Posterior vena cava (tissue), 2 donors: ENCODE measurements at regions of chr20 and their contacts with region 1.

Region 1: DNA sequence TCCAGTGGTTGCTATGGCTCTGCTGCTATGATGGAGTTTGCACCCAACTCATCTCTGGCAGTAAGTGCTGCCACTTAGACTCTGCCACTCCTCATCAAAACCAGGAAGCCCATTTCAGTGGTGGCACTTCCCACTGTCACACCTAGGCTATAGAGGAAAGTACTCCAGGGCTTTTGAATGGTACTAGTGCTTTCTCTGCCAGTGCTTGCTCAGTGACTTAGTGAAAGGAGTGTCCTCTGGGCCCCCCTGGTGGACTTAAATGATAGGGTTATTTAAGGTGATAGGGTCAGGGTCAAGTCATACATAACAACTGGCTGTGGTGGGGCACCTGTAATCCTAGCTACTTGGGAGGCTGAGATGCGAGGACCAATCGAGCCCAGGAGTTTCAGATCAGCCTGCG is 22.8 kb downstream of the FITM2 start:
- DNase-seq: no peak

Region 2: DNA sequence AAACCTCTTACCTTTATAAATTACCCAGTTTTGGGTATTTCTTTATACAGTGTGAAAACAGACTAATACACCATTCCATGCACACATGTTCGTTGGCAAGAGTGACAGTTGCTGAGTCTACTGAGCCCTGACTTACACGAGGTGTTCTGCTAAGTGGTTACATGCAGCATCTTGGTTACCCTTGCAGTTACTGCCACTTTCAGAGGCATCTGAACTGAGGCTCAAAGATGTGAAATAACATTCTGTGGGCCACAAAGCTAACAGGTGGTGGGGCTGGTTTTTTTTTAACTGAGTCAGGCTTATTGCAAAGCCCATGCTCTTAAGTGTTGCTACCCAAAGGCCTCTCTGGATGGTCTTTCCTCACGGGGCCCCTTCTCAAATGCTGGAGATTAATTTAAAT is 507.0 kb before region 1 on chr20:
- intact Hi-C with region 1: no loop called
- DNase-seq: no peak

Region 3: GRCh38 chr20:44319756-44320422 is 31.6 kb after region 1 on chr20:
- intact Hi-C with region 1: loop called in 1 of 2 experiments (anchors 2 kb)
- DNase-seq: no peak

Region 4: DNA sequence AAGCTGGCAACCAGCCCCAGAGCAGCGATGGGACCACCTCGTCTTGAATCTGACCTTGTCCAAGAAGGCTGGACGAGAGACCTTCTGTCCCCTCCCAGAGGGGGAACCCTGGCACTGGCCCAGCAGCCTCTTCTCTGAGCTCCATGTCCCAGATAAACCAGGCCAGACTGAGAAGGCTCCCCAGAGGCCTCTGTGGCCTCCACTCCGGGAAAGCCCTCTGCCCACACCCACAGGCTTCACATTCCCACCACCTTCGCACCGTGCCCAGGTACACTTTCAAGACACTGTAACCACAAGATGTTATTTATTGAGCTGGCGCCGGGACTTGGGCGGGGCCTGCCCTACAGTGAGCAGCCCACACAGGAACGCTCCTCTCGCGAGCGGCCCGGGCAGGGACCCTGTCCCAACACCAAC is 330.1 kb after region 1 on chr20:
- intact Hi-C with region 1: no loop called
- DNase-seq: peak; percentile 74